Posterior vena cava (tissue), 2 donors: ENCODE measurements at regions of chr4 and their contacts with region 1.

Region 1: DNA sequence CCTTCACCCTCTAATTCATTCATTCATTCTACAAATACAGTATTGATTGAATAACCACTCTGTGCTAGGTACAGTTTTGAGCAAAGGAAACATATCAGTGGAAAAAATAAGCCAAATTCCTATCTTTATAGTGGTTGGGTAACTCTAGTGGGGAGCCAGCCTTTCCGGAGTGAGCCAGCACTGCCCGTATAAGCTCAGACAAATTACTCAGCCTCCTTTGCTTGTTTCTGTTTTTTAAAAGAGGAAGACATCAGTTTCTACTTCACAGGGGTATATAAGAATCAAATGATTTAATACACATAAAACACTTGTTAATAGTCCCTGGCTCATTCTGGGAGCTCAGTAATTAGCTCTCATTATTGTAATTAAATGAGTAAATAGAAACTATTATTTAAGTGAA is 238.2 kb upstream of the MAD2L1 start:
- DNase-seq: no peak

Region 2: GRCh38 chr4:120266602-120267001 is 38.2 kb before region 1 on chr4:
- intact Hi-C with region 1: loop called in 1 of 2 experiments (anchors 1 kb)
- DNase-seq: no peak

Region 3: GRCh38 chr4:121156822-121157769 is 852.3 kb after region 1 on chr4:
- intact Hi-C with region 1: no loop called
- DNase-seq: peak; percentile 78